ENCODE measurements at regions of chr3 and their contacts with region 1.

Region 1: DNA sequence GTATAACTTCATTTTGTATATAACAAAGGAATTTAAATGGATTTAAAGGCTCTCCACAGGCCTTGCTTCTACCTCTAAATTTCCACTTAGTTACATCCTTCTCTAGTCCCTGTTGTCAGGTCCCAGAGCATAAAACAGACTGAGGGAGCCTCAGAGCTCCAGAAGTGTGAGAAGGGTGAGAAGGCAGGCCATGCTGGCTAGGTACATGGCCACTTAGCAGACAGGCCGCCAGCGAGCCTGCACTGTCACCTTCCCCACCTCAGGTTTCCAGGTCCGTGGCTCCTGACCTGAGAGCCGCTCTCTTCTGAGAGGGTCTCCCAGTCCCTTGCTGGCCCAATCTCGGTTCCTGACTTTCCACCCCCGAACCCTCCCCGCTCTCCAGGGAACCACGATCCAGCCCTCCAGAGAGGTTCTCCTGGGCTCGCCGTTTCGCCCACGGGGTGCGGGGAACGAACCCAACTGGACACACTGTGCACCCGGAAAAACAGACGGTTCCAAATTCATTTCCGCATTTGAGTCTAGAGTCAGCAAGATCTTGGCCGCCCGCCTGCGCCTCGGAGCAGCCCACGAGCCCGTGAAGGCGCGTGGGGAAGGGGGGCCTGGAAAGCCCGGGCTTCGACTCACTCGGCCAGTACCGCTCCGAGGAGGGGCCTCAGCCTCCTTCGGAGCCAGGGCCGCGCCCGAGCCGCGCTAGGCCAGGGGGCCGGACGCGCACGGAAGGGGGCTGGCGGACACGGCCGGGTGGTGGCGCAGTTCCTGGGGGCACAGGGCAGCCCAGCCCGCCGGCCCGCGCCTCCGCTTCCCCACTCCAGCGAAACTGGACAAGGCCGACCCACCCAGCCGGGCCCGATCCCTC is 16.7 kb upstream of the SOX2 start:
- DNase-seq: peak; percentile 87 to 93
- H3K4me3 ChIP-seq: peak overlapping the region in 2 of 3 donors; percentile 35 to 37
- H3K27ac ChIP-seq: peak overlapping the region; percentile 28 to 68 (median 41)
- H3K4me1 ChIP-seq: peaks cover 13 to 20% of the 10 kb centered on the region in 2 donors
- H3K27me3 ChIP-seq: peaks cover 22% of the 10 kb centered on the region
- CTCF ChIP-seq: peak in 1 of 6 experiments; percentile 25
- POLR2A ChIP-seq: peak in 1 of 2 donors; percentile 15

Region 2: DNA sequence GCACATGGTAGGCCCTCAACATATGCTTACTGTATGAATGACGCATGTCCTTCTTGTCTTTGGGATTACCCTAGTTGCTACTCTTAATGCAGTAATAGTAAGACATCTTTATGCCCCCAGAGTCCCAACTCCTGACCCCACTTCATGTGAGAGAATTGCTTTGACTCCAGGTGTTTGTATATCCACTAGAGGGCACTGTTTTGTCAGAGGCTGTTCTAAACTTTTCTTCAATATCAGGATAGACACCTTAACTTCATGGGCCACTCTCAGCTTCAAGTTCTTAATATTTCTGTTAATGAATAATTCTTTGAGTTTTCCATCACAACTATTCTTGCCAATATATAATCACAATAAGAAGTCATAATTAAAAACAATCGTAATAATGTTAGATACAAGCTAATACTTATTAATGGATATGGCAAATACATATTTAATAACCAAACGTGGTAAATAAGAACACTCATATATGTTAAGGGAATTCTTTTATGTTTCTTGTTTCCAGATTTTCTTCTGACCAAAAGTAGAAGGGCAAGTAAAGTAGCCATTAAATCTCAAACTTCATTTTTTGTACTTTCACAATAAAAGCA is 368.3 kb before region 1 on chr3:
- intact Hi-C with region 1: loop called (anchors 2 kb)
- DNase-seq: no peak
- H3K4me3 ChIP-seq: no peak overlapping the region
- H3K27ac ChIP-seq: no peak overlapping the region
- H3K4me1 ChIP-seq: peaks cover 0 to 12% of the 10 kb centered on the region in 2 donors
- H3K27me3 ChIP-seq: no peaks in the 10 kb centered on the region
- CTCF ChIP-seq: peak in 4 of 6 experiments; percentile 29 to 72 (median 57)
- POLR2A ChIP-seq: no peak

Region 3: DNA sequence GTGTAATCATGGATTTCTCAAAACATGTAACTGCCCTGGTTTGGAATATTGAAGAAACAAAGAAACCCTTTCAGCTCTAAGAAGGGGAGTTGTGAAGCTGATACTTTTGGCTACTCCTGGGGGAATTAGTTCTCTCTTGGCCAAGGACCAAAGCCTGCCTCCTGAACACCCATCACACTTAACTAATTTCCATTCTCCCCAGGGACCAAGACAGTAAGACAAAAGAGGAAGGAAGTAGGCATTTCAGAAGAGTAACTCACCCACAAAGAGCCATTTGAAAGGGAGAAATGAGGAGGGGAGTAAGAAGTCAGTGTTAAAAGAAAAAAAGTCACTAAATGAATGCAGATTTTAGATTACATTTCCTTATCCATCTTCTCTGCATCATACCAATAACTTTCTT is 311.3 kb before region 1 on chr3:
- intact Hi-C with region 1: loop called (anchors 10 kb)
- DNase-seq: no peak
- H3K4me3 ChIP-seq: no peak overlapping the region
- H3K27ac ChIP-seq: no peak overlapping the region
- H3K4me1 ChIP-seq: peaks cover 17 to 21% of the 10 kb centered on the region in 2 donors
- H3K27me3 ChIP-seq: no peaks in the 10 kb centered on the region
- CTCF ChIP-seq: no peak
- POLR2A ChIP-seq: no peak

Region 4: DNA sequence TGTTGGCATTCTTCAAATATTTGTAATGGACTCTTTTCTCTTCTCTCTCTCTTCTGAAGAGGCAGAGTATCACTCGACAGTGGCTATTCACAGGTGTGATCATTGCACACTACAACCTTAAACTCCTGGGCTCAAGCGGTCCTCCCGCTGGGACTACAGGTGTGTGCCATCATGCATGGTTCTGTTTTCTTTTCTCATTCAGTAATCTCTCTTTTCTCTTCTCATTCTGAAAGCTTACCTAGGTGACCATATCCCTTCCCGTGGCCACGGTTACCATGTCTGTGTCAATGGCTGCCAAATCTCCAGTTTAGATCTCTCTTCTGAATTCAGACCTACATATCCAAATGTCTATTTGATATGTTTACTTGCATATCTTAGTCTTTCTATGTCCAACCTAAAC is 113.0 kb after region 1 on chr3:
- intact Hi-C with region 1: no loop called
- DNase-seq: peak in 1 of 2 donors; percentile 3
- H3K4me3 ChIP-seq: no peak overlapping the region
- H3K27ac ChIP-seq: no peak overlapping the region
- H3K4me1 ChIP-seq: no peaks in the 10 kb centered on the region
- H3K27me3 ChIP-seq: no peaks in the 10 kb centered on the region
- CTCF ChIP-seq: no peak
- POLR2A ChIP-seq: no peak

Measured in thyroid gland (tissue), 4 donors.